Ovary (tissue), 10 donors: ENCODE measurements at regions of chr17 and their contacts with region 1.

Region 1: GRCh38 chr17:59853168-59853918 is 39.4 kb downstream of the TUBD1 start:
- DNase-seq: peak in 1 of 5 donors; percentile 63
- H3K4me3 ChIP-seq: no peak overlapping the region
- H3K27ac ChIP-seq: no peak overlapping the region
- H3K4me1 ChIP-seq: peaks cover 7% of the 10 kb centered on the region
- H3K27me3 ChIP-seq: no peaks in the 10 kb centered on the region
- CTCF ChIP-seq: no peak
- EP300 ChIP-seq: no peak
- POLR2A ChIP-seq: no peak

Region 2: DNA sequence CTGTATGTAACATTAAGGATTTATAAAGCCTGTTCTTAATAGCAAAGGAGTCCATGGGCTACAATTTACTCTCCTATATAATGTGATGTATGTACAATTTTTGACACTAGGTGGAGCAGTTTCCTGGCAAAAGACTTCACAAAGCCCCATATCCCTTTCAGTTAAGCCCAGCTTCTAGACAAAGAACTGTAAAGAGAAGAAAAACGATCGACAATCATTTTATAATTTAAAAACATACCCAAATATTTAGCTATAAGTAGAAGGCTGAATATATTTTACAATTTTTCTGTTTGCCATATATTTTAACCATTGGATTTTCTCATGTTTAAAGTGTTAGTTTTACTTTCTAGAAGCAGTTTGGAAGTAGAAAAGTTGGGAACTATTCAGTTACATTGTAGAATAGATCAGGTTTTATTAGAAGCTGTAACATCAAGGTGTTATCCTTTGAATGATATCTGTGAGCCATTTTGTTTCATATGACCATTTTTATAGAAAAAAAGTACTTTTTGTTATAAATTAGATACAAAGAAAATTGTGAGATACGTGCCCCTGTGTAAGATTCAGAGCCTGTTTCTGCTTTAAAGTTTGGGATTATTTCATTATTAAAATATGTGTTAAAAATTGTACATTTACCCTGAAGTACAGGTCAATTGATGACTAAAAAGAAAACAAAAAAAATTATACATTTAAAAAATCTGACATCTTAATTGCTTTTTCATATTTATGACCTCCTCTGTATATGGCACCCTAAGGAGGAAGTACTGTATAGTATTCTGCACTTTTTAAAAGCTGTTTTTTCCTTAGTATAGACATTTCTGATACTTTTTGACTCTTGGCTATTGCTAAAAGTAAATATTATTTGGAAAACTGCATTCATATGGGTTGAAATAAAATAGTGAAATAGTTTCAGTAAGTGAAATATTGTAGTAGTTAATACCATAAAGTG is 99.5 kb before region 1 on chr17:
- intact Hi-C with region 1: loop called in 1 of 4 experiments (anchors 5 kb)
- DNase-seq: no peak
- H3K4me3 ChIP-seq: no peak overlapping the region
- H3K27ac ChIP-seq: no peak overlapping the region
- H3K4me1 ChIP-seq: peaks cover 5% of the 10 kb centered on the region
- H3K27me3 ChIP-seq: no peaks in the 10 kb centered on the region
- CTCF ChIP-seq: peak; percentile 56 to 82 (median 76)
- EP300 ChIP-seq: no peak
- POLR2A ChIP-seq: no peak